Right ventricle myocardium inferior (tissue), 1 donor: ENCODE measurements at regions of chr22 and their contacts with region 1.

Region 1: GRCh38 chr22:26302726-26303125 is 126.3 kb upstream of the ASPHD2 start:
- DNase-seq: no peak
- ATAC-seq: no peak

Region 2: DNA sequence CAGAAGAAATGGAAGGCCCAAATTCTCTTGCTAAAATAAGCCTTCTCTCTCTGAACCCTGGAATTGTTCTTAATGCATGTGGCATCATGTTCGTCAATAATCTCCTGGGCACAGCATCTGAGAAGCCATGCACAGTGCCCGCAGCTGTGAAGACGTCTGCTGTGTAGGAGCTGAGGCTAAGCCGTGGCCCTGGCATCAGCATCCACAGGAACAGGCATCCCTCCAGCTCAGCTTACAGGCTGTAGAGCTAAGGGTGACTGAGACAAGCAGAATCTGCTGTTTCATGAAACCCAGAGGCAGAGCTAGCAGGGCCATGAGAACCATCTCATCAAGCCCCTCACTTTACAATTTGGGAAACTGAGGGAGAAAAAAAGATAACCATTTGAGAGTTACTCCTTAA is 72.8 kb before region 1 on chr22:
- intact Hi-C with region 1: loop called (anchors 10 kb)
- DNase-seq: no peak
- ATAC-seq: no peak